ENCODE measurements at regions of chr4 and their contacts with region 1.

Region 1: DNA sequence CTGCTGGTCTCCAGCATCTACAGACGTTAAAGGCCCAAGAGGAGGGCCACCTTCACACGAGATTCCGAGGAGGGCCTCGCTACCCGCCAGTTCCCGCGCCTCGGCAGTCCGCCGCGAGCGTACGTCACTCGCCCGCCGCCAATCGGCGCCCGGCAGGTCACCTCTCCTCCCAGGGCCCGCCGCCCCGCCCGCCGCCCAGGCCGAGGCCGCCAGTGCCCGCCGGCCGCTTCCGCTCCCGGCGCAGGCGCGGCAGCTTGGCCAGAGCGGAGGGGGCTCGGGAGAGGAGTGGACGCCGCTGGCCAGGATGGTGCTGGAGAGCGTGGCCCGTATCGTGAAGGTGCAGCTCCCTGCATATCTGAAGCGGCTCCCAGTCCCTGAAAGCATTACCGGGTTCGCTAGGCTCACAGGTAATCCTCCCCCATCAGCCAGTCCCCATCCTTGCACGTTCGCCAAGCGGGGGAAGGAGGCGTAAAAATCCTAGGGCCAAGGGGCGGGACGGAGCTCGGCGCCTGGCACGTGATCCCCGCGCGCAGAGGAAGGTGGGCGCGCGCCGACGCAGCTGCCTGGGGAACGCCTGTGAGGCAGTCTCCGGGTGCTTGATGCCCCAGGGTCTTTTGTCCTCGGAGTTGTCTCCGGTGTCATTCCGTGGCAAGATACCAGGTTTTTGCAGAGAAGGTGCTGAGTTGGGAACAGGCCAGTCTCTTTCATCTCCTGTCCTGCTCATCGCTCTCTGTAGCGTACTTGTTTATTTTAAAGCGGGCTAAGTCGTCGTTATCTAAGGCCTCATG is at the start of gene CISD2:
- DNase-seq: peak; percentile 94
- ATAC-seq: peak; percentile 98 to 99
- total RNA-seq, gene CISD2: 18.5 to 20.0 TPM

Region 2: DNA sequence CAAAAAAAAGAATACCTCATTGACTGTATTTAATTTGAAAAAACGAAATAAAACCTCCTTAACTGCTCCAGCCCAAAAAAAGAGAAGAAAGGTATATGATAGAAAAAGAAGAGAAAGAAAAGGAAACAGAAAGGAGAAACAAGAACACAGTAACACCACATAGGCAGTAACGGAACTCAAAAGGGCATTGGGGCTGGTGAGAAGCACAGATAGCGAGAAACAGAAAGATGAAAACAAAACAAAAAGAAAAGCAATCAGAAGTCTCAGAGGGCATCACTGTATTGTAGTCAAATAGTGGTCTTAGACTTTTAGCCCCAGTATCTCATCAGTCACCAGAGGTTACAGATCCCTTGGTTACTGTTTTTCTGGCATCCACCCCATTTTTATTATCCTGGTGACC is 279.2 kb before region 1 on chr4:
- intact Hi-C with region 1: no loop called
- DNase-seq: no peak
- ATAC-seq: no peak

Region 3: GRCh38 chr4:102730968-102731534 is 137.9 kb before region 1 on chr4:
- intact Hi-C with region 1: no loop called
- DNase-seq: no peak
- ATAC-seq: no peak

Region 4: GRCh38 chr4:102826890-102827673 is 41.9 kb before region 1 on chr4 and contains the start of gene UBE2D3:
- intact Hi-C with region 1: loop called in 1 of 2 experiments (anchors 2 kb)
- DNase-seq: peak; percentile 94
- ATAC-seq: peak; percentile 74 to 77
- total RNA-seq, gene UBE2D3: 233 to 294 TPM

Region 5: DNA sequence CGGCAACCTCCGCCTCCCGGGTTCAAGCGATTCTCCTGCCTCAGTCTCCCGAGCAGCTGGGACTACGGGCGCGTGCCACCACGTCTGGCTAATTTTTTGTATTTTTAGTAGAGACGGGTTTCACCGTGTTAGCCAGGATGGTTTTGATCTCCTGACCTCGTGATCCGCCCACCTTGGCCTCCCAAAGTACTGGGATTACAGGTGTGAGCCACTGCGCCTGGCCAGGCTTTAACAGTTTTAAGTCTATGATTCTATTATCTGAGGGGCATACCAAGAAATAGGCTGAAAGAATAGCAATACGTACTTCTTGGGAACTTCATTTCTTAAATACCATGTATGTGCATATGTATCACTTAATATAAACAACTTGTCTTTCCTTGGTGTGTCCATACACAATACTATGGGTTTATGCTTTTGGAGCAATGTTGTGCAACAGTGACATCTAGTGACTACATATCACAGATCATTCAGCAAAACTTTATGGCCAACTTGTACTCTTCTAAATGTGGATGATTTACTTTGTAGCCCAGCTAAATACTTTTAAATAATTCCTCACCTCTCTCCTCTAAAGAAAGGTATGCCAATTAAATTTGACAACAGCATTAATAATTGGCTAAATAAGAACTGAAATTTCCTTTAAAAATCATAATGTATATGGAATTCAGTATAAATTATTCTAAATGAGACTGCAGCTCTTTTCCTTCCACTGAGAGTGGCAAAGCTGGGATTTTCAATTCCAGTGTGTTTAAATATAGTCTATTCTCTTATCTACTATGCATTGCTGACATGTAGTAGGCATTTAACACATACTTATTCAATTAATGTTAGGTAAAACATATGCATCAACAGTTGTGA is 140.1 kb after region 1 on chr4:
- intact Hi-C with region 1: no loop called
- DNase-seq: no peak
- ATAC-seq: peak; percentile 66 to 74